Sigmoid colon (tissue), 7 donors: ENCODE measurements at regions of chr9 and their contacts with region 1.

Region 1: GRCh38 chr9:135864447-135865049 is 42.8 kb downstream of the CAMSAP1 start:
- DNase-seq: no peak
- H3K4me3 ChIP-seq: no peak overlapping the region
- H3K27ac ChIP-seq: no peak overlapping the region
- H3K4me1 ChIP-seq: peaks cover 0 to 7% (median 5%) of the 10 kb centered on the region in 4 donors
- H3K27me3 ChIP-seq: no peaks in the 10 kb centered on the region
- CTCF ChIP-seq: peak in 3 of 4 experiments; percentile 60 to 87 (median 73)
- EP300 ChIP-seq: no peak
- POLR2A ChIP-seq: no peak

Region 2: GRCh38 chr9:135792268-135793128 is 72.0 kb before region 1 on chr9:
- intact Hi-C with region 1: no loop called
- DNase-seq: no peak
- H3K4me3 ChIP-seq: no peak overlapping the region
- H3K27ac ChIP-seq: no peak overlapping the region
- H3K4me1 ChIP-seq: no peaks in the 10 kb centered on the region
- H3K27me3 ChIP-seq: peaks cover 0 to 5% (median 0%) of the 10 kb centered on the region in 3 donors
- CTCF ChIP-seq: no peak
- EP300 ChIP-seq: no peak
- POLR2A ChIP-seq: no peak

Region 3: DNA sequence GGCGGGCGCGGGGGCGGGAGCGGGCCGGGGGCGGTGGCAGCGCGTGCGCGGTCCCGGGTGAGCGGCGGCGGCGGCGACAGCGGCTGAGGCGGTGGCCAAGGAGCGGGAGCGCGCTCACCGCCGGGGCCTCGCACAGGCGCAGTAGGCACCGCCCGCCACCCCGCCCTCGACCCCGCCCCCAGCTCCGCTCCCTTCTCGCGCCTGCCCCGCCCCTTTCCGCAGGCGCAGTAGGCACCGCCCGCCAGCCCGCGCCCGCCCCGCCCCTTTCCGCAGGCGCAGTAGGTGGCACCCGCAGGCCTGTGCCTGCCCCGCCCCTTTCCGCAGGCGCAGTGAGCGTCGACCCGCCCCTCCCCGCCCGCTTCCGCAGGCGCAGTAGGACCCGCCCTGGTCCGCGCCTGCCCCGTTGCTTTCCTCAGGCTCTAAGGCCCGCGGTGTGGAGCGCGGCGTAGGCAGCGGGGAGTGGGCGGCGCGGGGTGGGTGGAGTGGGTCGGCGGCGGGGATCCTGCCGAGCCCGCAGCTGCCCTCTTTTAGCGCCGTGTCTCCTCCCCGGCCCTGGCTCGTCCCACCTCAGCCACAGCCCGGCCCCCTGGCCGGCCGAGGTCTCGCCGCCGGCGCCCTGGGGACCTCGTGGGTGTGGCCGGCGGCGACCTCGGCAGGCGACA is 43.0 kb after region 1 on chr9 and contains the start of gene CAMSAP1:
- intact Hi-C with region 1: loop called (anchors 5 kb)
- DNase-seq: peak; percentile 96
- H3K4me3 ChIP-seq: peak within 1 kb of the TSS; percentile 80 to 95 (median 88)
- H3K27ac ChIP-seq: peak within 1 kb of the TSS; percentile 77 to 88 (median 84)
- H3K4me1 ChIP-seq: peaks cover 0 to 51% (median 37%) of the 10 kb centered on the region in 4 donors
- H3K27me3 ChIP-seq: no peaks in the 10 kb centered on the region
- CTCF ChIP-seq: no peak
- EP300 ChIP-seq: no peak
- POLR2A ChIP-seq: peak in 1 of 2 donors; percentile 27
- total RNA-seq, gene CAMSAP1: 19.4 to 37.7 (median 21.2) TPM

Region 4: GRCh38 chr9:136045971-136046920 is 181.7 kb after region 1 on chr9:
- intact Hi-C with region 1: no loop called
- DNase-seq: peak; percentile 76
- H3K4me3 ChIP-seq: no peak overlapping the region
- H3K27ac ChIP-seq: no peak overlapping the region
- H3K4me1 ChIP-seq: peaks cover 0 to 77% (median 58%) of the 10 kb centered on the region in 4 donors
- H3K27me3 ChIP-seq: no peaks in the 10 kb centered on the region
- CTCF ChIP-seq: no peak
- EP300 ChIP-seq: no peak
- POLR2A ChIP-seq: no peak

Region 5: GRCh38 chr9:136336156-136336870 is 471.8 kb after region 1 on chr9:
- intact Hi-C with region 1: no loop called
- DNase-seq: no peak
- H3K4me3 ChIP-seq: no peak overlapping the region
- H3K27ac ChIP-seq: no peak overlapping the region
- H3K4me1 ChIP-seq: peaks cover 0 to 4% (median 0%) of the 10 kb centered on the region in 4 donors
- H3K27me3 ChIP-seq: no peaks in the 10 kb centered on the region
- CTCF ChIP-seq: no peak
- EP300 ChIP-seq: no peak
- POLR2A ChIP-seq: no peak